ENCODE measurements at regions of chr12 and their contacts with region 1.

Region 1: GRCh38 chr12:119649202-119649808 is 18.6 kb upstream of the PRKAB1 start:
- DNase-seq: no peak
- H3K4me3 Mint-ChIP-seq: no peak overlapping the region
- H3K27ac Mint-ChIP-seq: no peak overlapping the region
- H3K4me1 Mint-ChIP-seq: no peaks in the 10 kb centered on the region
- H3K27me3 Mint-ChIP-seq: peaks cover 4% of the 10 kb centered on the region

Region 2: DNA sequence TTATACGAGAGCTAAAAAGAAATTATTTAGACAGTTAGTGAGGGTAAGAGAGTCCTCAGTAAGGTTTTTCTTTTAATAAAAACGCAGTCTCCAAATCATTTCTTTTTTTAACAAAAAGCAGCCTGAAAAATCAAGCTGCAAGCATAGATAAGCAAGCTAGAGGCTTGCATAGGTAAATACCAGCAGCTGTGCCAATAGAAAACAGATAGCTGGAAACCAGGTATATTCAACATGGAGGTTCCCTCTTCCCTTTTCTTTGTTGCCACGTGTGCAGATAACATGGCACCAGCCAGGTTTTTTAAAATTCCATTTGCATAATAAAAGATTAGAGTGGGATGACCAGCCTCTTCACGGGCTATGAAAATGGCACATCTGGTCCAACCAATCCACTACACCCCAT is 12.6 kb after region 1 on chr12:
- CTCF ChIA-PET with region 1: interaction called, 13 read pairs
- POLR2A ChIA-PET with region 1: no interaction called
- intact Hi-C with region 1: no loop called
- DNase-seq: no peak
- H3K4me3 Mint-ChIP-seq: no peak overlapping the region
- H3K27ac Mint-ChIP-seq: no peak overlapping the region
- H3K4me1 Mint-ChIP-seq: peaks cover 14% of the 10 kb centered on the region
- H3K27me3 Mint-ChIP-seq: no peaks in the 10 kb centered on the region

Measured in activated CD4-positive, alpha-beta memory T cell treated with anti-CD3 and anti-CD28 coated beads for 36 hours (primary cell).